Left cardiac atrium (tissue), 4 donors: ENCODE measurements at regions of chr14 and their contacts with region 1.

Region 1: GRCh38 chr14:95431199-95432143 is 85.0 kb downstream of the SYNE3 start:
- DNase-seq: no peak
- ATAC-seq: peak; percentile 58 to 69

Region 2: GRCh38 chr14:94689218-94689984 is 742.1 kb before region 1 on chr14:
- intact Hi-C with region 1: loop called in 1 of 2 experiments (anchors 2 kb)
- DNase-seq: peak; percentile 56
- ATAC-seq: peak; percentile 94 to 95

Region 3: GRCh38 chr14:95098984-95099599 is 332.4 kb before region 1 on chr14:
- intact Hi-C with region 1: loop called in 1 of 2 experiments (anchors 10 kb)
- DNase-seq: peak; percentile 74
- ATAC-seq: peak; percentile 72 to 82

Region 4: DNA sequence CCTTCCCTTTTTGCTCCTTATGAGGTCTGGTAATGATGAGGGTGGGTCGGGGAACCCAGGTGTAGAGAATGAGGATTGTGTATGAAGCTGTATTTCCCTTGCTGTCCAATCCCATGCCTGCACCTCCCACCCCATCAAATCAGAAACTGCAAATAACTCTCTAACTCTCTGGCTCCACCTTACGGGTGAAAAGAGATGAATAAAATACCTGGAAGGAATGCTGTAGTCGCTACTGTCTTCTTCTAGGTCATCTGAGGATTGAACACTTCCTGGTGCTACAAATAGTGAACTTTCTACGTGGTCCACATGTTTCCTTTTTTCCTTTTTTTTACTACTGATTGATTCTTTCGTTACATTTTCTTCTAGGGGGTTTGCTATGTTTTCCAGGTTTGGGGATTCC is 235.2 kb before region 1 on chr14:
- intact Hi-C with region 1: loop called in 1 of 2 experiments (anchors 10 kb)
- DNase-seq: no peak
- ATAC-seq: peak; percentile 23 to 41

Region 5: DNA sequence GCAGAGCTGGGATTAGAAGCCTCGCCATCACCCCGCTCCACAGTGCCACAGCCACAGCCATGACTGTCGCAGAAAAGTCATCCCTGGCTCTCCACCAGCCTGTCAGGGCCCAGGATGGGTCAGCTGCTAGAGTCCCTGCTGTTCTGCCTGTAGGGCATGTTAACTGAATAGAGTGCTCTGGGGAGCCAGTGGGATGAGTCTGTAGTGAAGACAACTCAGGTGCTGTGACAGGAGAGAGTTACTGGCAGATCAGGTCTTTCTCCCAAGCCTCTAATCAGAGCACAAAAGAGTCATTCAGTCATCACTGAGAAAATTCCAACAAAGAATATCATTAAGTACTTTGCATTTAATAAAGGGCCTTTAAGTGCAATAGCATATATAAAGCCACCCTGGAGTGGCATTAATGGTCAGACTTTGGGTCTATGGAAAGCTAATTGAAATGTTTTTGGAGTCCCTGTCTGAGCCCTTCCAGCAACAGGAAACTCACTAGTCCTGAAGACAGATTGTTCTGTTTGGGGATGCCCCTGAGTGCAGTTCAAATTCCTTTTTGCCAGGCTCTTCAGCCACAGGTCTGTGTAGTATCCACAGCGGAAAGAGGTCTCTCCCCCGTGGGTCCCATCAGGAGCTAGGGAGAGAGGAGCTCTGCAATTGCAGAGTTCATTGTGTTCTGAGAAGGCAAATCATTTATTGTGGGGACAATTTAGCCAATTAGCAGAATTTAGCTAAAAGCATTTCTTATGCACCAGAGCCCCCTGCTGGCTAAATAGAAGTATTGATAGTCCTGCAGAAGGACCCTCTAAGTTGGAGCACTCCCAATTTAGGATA is 562.5 kb after region 1 on chr14:
- intact Hi-C with region 1: loop called in 1 of 2 experiments (anchors 5 kb)
- DNase-seq: no peak
- ATAC-seq: no peak

Region 6: GRCh38 chr14:96320605-96321004 is 889.1 kb after region 1 on chr14:
- intact Hi-C with region 1: no loop called
- DNase-seq: no peak
- ATAC-seq: no peak